ENCODE measurements at regions of chr17 and their contacts with region 1.

Region 1: DNA sequence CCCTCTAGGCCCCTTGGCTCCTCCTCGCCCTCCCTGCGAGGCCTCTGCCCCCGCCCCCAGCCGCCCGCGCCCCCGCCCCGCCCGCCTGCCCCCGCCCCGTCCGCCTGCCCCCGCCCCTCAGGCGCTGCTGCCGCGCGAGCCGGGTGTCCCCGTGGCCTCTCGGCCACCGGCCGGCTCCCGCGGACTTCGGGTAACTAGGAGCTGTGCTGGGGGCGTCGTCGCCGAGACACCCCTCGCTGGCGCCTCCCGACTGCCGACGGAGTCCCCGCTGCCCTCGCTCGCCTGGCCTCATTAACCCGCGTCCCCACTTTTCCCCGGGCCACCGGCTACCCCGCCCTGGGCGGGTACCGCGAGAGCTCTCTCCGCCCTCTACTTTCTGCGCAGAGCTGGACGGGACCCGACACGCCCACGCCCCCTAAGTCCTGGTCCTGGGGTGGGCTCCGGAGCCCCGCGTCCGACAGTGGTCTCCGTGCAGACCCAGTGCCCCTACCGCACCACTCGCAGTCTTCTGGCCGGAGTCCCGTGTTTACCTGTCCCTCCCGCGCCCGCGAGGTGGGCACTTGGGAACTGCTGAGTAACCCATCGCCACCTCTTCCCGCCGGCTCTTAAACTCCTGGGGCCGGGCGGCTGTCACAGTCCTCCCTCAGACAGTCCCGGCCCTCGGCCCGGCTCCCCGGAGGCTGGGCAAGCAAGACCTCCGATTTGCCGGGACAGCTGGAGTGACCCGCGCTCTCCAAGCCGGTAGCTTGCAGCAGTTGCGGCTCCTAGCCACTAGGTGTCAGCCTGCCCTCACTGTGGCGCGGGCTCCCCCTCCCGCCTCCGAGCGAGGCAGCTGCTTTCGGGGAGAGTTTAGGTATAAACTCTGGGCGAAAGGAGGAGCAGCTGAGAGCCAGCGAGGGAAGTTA is at the start of gene TLCD1:
- DNase-seq: no peak
- ATAC-seq: peak; percentile 65
- H3K4me3 ChIP-seq: peak within 1 kb of the TSS; percentile 69 to 96
- H3K27ac ChIP-seq: peak within 1 kb of the TSS; percentile 99
- H3K4me1 ChIP-seq: peaks cover 41% of the 10 kb centered on the region
- H3K27me3 ChIP-seq: no peaks in the 10 kb centered on the region
- CTCF ChIP-seq: peak; percentile 99
- total RNA-seq, gene TLCD1: 55.7 TPM

Region 2: DNA sequence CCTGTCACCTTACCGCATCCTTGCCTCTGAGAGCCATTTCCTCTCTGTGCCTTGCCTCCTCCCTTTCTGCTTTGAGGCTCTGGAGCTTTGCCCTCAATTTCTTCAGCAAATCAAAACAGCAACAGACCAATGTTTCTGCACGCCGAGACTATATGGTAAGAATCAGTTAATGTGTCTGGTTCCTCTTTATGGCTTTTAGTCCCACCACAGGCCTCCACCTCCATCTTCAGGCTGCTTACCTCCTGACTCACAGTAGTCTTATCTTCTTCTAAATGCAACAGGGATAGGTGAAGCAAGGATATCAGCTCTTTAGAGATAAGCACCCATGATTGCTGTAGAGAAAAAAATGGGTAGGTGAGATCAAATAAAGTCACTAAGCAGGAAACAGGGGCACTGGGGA is 140.6 kb before region 1 on chr17:
- CTCF ChIA-PET with region 1: no interaction called
- POLR2A ChIA-PET with region 1: no interaction called
- in situ Hi-C with region 1: no loop called
- intact Hi-C with region 1: no loop called
- DNase-seq: no peak
- ATAC-seq: no peak
- H3K4me3 ChIP-seq: no peak overlapping the region
- H3K27ac ChIP-seq: no peak overlapping the region
- H3K4me1 ChIP-seq: no peaks in the 10 kb centered on the region
- H3K27me3 ChIP-seq: no peaks in the 10 kb centered on the region
- CTCF ChIP-seq: no peak

Region 3: GRCh38 chr17:28684963-28685362 is 41.5 kb before region 1 on chr17:
- CTCF ChIA-PET with region 1: no interaction called
- POLR2A ChIA-PET with region 1: no interaction called
- in situ Hi-C with region 1: no loop called
- intact Hi-C with region 1: no loop called
- DNase-seq: no peak
- ATAC-seq: peak; percentile 36; the same call in 1 of the 2 replicates
- H3K4me3 ChIP-seq: no peak overlapping the region
- H3K27ac ChIP-seq: no peak overlapping the region
- H3K4me1 ChIP-seq: no peaks in the 10 kb centered on the region
- H3K27me3 ChIP-seq: no peaks in the 10 kb centered on the region
- CTCF ChIP-seq: no peak

Region 4: DNA sequence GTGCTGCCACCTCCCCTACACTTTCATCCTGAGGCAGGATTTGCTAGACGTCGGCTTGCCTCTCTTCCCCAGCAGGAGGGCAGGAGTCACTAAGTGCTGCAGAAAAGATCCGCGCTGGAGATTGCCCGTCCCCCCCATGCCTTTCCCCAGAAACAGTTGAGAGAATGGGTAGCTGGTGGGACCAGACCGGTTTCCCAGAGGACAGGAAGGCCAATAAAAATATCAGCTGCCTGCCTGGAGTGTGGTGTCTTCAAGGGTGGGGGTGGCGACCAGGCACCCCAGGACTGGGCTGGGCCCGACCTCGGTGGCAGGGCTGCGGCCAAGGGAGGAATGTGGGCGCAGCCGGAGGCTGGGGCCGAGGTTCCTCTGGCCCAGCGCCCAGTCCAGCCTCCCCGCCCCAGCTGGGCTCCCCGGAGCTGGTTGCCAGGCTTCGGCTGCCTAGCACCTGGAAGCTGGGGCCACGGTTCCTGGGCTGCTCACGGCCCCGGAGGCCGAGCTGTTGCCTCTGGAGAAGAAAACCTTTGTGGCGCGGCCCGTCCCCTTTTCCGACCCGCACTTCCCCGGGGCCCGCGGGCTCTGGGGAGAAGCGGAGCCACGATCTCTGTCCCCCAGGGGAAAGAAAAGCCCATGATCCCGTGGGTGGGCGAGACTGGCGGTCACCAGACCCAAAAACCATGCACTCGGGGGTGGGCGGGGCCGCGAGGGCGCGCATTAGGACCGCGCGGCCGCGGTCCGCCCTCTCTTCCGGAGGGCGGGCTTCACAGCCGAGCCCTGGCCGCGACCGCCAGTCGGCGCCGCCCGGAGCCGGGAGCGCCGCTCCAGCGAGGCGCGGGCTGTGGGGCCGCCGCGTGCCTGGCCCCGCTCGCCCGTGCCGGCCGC is 17.0 kb after region 1 on chr17 and contains the start of gene TRAF4:
- CTCF ChIA-PET with region 1: interaction called, 123 read pairs
- POLR2A ChIA-PET with region 1: interaction called, 26 read pairs
- in situ Hi-C with region 1: no loop called
- intact Hi-C with region 1: no loop called
- DNase-seq: no peak
- ATAC-seq: peak; percentile 85
- H3K4me3 ChIP-seq: peak within 1 kb of the TSS; percentile 89 to 99
- H3K27ac ChIP-seq: peak within 1 kb of the TSS; percentile 99
- H3K4me1 ChIP-seq: peaks cover 39% of the 10 kb centered on the region
- H3K27me3 ChIP-seq: no peaks in the 10 kb centered on the region
- CTCF ChIP-seq: no peak
- total RNA-seq, gene TRAF4: 108 TPM

Region 5: GRCh38 chr17:28763804-28764266 is 37.4 kb after region 1 on chr17:
- CTCF ChIA-PET with region 1: interaction called, 12 read pairs
- POLR2A ChIA-PET with region 1: no interaction called
- in situ Hi-C with region 1: no loop called
- intact Hi-C with region 1: no loop called
- DNase-seq: peak; percentile 42
- ATAC-seq: peak; percentile 66
- H3K4me3 ChIP-seq: no peak overlapping the region
- H3K27ac ChIP-seq: no peak overlapping the region
- H3K4me1 ChIP-seq: peaks cover 17% of the 10 kb centered on the region
- H3K27me3 ChIP-seq: no peaks in the 10 kb centered on the region
- CTCF ChIP-seq: peak; percentile 86

Region 6: GRCh38 chr17:28792877-28793661 is 66.6 kb after region 1 on chr17:
- CTCF ChIA-PET with region 1: no interaction called
- POLR2A ChIA-PET with region 1: no interaction called
- in situ Hi-C with region 1: no loop called
- intact Hi-C with region 1: no loop called
- DNase-seq: no peak
- ATAC-seq: peak; percentile 64
- H3K4me3 ChIP-seq: no peak overlapping the region
- H3K27ac ChIP-seq: no peak overlapping the region
- H3K4me1 ChIP-seq: no peaks in the 10 kb centered on the region
- H3K27me3 ChIP-seq: no peaks in the 10 kb centered on the region
- CTCF ChIP-seq: no peak

Region 7: DNA sequence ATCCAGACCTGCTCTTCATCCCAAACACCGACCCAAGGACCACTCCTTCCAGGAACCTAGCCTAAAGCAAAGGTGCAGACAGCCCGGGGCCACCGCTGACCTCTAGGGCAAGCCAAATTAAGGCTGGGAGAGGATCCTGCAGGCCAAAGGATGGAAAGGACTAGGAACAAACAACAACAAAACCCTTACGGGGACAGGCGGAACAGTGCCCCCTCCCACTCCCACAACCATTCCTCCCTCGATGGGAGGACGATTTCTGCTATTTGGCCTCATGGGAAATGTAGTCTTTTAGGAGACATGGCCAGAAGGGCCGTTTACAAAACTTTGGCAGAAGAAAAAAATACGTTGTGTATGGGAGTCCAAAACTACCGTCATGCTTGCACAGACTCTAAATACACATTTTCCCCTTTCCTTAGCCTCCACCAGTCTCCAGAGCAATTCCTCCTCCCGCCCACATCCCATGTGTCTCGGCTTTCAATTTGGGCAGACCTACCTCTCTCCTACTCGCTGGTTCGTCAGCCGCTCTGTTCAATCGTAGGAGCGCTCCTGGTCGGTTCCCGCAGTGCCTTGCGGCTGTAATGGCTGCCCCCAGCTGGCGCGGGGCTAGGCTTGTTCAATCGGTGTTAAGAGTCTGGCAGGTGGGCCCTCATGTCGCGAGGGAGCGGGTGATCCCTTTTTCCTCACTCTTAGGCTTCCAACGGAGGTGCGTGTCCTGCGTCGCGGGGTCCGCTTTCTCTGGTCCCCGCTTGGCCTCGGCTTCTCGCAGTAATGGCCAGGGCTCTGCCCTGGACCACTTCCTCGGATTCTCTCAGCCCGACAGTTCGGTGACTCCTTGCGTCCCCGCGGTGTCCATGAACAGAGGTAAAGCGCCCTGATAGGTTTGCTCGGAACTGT is 128.2 kb after region 1 on chr17 and contains the start of gene ERAL1:
- CTCF ChIA-PET with region 1: interaction called, 10 read pairs
- POLR2A ChIA-PET with region 1: no interaction called
- in situ Hi-C with region 1: no loop called
- intact Hi-C with region 1: no loop called
- DNase-seq: peak; percentile 69
- ATAC-seq: peak; percentile 100
- H3K4me3 ChIP-seq: peak within 1 kb of the TSS; percentile 74 to 91
- H3K27ac ChIP-seq: peak within 1 kb of the TSS; percentile 96
- H3K4me1 ChIP-seq: peaks cover 9% of the 10 kb centered on the region
- H3K27me3 ChIP-seq: no peaks in the 10 kb centered on the region
- CTCF ChIP-seq: no peak
- total RNA-seq, gene ERAL1: 74.2 TPM

Region 8: DNA sequence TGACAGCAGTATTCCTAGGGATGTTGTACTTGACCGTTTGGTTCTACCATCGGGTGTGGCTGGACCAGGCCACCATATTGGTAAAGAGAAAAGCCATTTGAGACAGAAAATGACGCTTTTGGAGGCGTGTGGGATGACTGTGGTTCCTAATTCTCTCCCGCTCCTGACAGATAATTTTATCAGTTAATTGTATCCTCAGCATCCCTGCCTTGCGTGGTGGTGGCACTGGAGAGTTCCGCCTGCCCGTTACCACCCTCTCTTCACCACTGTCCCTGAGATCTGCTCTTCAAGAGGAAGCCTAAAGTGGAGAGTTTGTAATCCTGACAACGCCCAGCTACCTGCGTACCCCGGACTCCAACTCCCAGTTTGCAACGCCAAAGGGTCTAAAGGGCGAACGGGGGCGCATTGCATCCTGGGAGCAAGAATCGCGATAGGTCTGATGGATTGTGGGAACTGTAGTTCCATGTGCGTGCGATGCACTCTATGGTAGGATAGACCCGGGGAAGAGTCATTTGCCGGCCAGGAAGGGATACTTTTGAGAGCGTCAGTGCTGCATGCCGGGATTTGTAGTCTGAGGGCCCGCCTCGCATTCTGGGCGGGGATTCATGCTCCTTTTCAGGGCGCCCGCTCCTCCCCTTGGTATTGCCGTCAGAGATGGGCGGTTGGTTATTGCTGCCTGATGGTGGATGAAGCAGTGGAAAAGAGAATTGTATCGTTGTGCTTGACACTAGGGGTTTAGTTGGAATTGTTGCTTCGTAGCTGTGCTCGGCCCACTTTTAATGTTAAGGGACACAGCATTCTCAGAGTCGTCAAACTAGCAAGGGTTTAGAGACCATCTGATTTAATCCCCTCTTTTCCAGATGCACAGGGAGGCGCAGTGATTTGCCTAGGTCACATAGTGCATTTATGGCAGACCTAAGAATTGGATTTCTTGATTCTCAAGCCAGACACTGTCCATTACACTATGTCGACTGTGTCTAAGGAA is 225.8 kb after region 1 on chr17:
- CTCF ChIA-PET with region 1: interaction called, 9 read pairs
- POLR2A ChIA-PET with region 1: interaction called, 4 read pairs
- in situ Hi-C with region 1: no loop called
- intact Hi-C with region 1: loop called (anchors 5 kb)
- DNase-seq: peak; percentile 98
- ATAC-seq: peak; percentile 84
- H3K4me3 ChIP-seq: peak overlapping the region; percentile 80 to 90
- H3K27ac ChIP-seq: peak overlapping the region; percentile 100
- H3K4me1 ChIP-seq: peaks cover 20% of the 10 kb centered on the region
- H3K27me3 ChIP-seq: no peaks in the 10 kb centered on the region
- CTCF ChIP-seq: no peak

Measured in Panc1 (cell line).